ENCODE measurements at regions of chr3 and their contacts with region 1.

Region 1: DNA sequence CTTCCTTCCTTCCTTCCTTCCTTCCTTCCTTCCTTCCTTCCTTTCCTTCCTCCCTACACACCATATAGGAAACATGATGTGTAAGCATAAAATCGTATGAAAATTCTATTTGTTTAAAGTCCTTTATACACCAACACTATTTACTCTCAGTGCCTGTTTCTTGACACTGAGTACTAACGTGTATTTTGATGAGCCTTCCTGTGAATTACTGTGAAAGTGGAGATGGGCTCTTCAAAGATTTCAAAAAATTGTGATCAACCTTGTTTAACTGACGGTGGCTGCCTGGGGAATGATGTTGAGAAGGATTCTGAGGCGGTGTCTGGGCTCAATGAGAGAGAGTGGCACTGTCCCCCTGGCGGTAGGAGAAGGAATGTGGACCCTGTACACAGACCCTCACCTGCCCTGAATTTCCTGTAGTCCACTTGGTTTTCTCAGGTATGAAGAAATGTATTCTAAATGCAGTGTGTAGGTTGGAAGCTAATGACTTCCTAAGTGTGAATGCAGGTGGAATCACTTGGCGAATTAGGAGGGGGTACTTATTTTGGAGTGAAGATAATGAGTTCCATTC is 237.9 kb downstream of the GAP43 start:
- DNase-seq: peak; percentile 95
- H3K4me3 ChIP-seq: peak overlapping the region; percentile 6
- H3K27ac ChIP-seq: peak overlapping the region; percentile 100
- H3K4me1 ChIP-seq: peaks cover 86% of the 10 kb centered on the region
- H3K27me3 ChIP-seq: no peaks in the 10 kb centered on the region
- CTCF ChIP-seq: peak; percentile 44

Region 2: GRCh38 chr3:115836944-115837343 is 24.3 kb before region 1 on chr3:
- CTCF ChIA-PET with region 1: interaction called, 8 read pairs
- POLR2A ChIA-PET with region 1: interaction called, 14 read pairs
- intact Hi-C with region 1: loop called (anchors 1 kb)
- DNase-seq: peak; percentile 82
- H3K4me3 ChIP-seq: no peak overlapping the region
- H3K27ac ChIP-seq: peak overlapping the region; percentile 96
- H3K4me1 ChIP-seq: peaks cover 72% of the 10 kb centered on the region
- H3K27me3 ChIP-seq: no peaks in the 10 kb centered on the region
- CTCF ChIP-seq: peak; percentile 74

Region 3: DNA sequence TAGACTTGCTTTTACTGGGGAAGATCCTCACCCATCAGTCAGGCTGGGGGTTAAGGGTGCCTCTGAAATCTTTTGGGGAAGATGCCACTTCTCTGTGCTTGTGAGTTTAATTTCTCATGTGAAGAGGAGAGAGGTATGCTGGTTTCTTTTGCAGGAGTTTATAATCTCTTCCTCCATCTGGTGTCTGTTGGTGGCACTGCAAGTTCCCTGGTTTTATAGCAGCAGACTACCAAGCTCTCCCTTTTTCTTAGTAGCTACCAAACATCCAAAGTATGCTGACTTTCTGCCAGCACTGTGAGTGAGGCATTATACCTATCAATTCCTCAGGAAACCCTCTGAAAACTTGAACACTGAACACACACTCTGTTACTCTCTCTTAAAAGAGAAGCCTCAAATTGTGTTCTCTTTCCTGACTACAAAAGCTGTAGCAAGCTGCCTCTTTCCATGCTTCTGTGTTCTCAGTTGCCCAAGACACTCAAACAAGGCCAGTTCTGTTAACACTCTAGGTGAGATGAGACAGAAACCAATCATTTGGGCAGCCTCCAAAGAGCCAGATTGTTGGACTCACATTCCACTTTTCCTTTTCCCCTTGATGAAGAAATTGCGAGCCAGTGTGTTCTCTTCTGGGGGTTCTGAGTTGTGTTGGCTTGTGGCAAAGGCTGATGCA is 61.6 kb after region 1 on chr3:
- CTCF ChIA-PET with region 1: interaction called, 4 read pairs
- POLR2A ChIA-PET with region 1: no interaction called
- intact Hi-C with region 1: loop called (anchors 1 kb)
- DNase-seq: peak; percentile 86
- H3K4me3 ChIP-seq: no peak overlapping the region
- H3K27ac ChIP-seq: peak overlapping the region; percentile 73
- H3K4me1 ChIP-seq: peaks cover 42% of the 10 kb centered on the region
- H3K27me3 ChIP-seq: no peaks in the 10 kb centered on the region
- CTCF ChIP-seq: peak; percentile 71

Region 4: GRCh38 chr3:115996420-115997108 is 135.3 kb after region 1 on chr3:
- CTCF ChIA-PET with region 1: no interaction called
- POLR2A ChIA-PET with region 1: interaction called, 4 read pairs
- intact Hi-C with region 1: loop called (anchors 2 kb)
- DNase-seq: no peak
- H3K4me3 ChIP-seq: no peak overlapping the region
- H3K27ac ChIP-seq: no peak overlapping the region
- H3K4me1 ChIP-seq: peaks cover 13% of the 10 kb centered on the region
- H3K27me3 ChIP-seq: no peaks in the 10 kb centered on the region
- CTCF ChIP-seq: no peak

Region 5: GRCh38 chr3:116059421-116060096 is 198.3 kb after region 1 on chr3:
- CTCF ChIA-PET with region 1: no interaction called
- POLR2A ChIA-PET with region 1: no interaction called
- intact Hi-C with region 1: loop called (anchors 1 kb)
- DNase-seq: peak; percentile 96
- H3K4me3 ChIP-seq: no peak overlapping the region
- H3K27ac ChIP-seq: peak overlapping the region; percentile 76
- H3K4me1 ChIP-seq: peaks cover 31% of the 10 kb centered on the region
- H3K27me3 ChIP-seq: no peaks in the 10 kb centered on the region
- CTCF ChIP-seq: no peak

Region 6: GRCh38 chr3:116140100-116140689 is 278.9 kb after region 1 on chr3:
- CTCF ChIA-PET with region 1: no interaction called
- POLR2A ChIA-PET with region 1: no interaction called
- intact Hi-C with region 1: loop called (anchors 10 kb)
- DNase-seq: peak; percentile 80
- H3K4me3 ChIP-seq: no peak overlapping the region
- H3K27ac ChIP-seq: no peak overlapping the region
- H3K4me1 ChIP-seq: peaks cover 17% of the 10 kb centered on the region
- H3K27me3 ChIP-seq: no peaks in the 10 kb centered on the region
- CTCF ChIP-seq: peak; percentile 91

Region 7: DNA sequence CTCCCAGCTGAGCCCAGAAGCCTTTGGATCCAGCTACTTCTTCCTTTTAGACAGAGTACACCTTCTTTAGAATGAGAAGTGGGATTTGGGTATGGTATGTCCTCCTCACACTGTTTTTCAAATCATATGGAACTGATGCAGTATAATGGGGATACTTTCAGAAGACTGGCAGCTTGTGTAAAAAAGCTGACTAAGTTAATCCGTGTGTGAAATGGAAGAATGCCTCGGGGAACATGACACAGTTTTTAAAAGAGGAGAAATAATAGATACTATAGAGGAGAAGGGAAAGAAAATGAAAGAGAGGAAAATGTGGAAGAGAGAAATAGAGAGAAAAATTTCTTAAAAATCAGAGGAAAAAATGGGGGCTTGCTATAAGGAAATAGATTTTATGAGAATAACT is 896.1 kb after region 1 on chr3:
- CTCF ChIA-PET with region 1: no interaction called
- POLR2A ChIA-PET with region 1: no interaction called
- intact Hi-C with region 1: loop called (anchors 2 kb)
- DNase-seq: peak; percentile 32
- H3K4me3 ChIP-seq: no peak overlapping the region
- H3K27ac ChIP-seq: no peak overlapping the region
- H3K4me1 ChIP-seq: peaks cover 22% of the 10 kb centered on the region
- H3K27me3 ChIP-seq: no peaks in the 10 kb centered on the region
- CTCF ChIP-seq: no peak

Measured in A673 (cell line).